Psoas muscle (tissue), 8 donors: ENCODE measurements at regions of chr16 and their contacts with region 1.

Region 1: DNA sequence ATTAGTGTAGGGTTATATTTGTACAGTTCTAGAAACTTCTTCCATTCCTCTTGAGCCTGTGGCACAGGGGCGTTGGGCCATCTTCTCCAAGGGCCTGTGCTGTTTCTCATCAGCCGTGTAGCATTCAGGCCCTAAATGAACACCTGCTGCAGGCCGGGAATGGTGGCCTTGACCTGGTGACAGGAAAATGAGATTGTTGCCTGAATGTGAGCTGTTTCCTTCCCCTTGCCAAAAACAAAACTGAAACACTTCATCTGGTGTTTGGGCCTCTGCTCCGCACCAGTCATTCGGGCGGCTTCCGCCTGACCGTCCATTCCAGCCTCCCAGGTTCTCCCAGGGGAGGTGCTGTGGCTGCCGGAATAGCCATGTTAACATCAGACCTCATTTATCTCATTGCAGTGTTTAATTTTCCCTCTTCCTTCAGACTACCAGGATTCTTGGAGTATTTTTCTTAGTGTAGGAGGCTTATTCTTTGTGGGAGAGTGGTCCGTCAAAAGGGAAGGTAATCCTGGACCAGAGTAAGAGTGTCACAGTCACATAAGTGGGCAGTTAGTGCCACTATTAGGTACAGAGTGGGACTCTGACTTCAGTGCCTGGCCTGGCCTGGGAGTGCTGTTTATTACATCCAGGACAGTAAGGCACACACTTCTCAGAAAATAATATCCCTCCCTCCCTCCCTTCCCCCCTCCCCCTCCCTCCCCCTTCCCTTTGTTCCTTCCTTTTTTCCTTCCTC is 61.9 kb downstream of the WWP2 start:
- DNase-seq: peak; percentile 54 to 58
- ATAC-seq: peak in 3 of 4 donors; percentile 35 to 40 (median 35)
- H3K4me3 ChIP-seq: no peak overlapping the region
- H3K27ac ChIP-seq: peak overlapping the region; percentile 54
- H3K4me1 ChIP-seq: peaks cover 6% of the 10 kb centered on the region
- H3K27me3 ChIP-seq: no peaks in the 10 kb centered on the region
- CTCF ChIP-seq: no peak

Region 2: GRCh38 chr16:69773260-69773947 is 50.6 kb before region 1 on chr16:
- intact Hi-C with region 1: loop called in 1 of 2 experiments (anchors 10 kb)
- DNase-seq: no peak
- ATAC-seq: no peak
- H3K4me3 ChIP-seq: no peak overlapping the region
- H3K27ac ChIP-seq: no peak overlapping the region
- H3K4me1 ChIP-seq: no peaks in the 10 kb centered on the region
- H3K27me3 ChIP-seq: no peaks in the 10 kb centered on the region
- CTCF ChIP-seq: no peak

Region 3: GRCh38 chr16:69787883-69788282 is 36.1 kb before region 1 on chr16:
- intact Hi-C with region 1: no loop called
- DNase-seq: no peak
- ATAC-seq: no peak
- H3K4me3 ChIP-seq: no peak overlapping the region
- H3K27ac ChIP-seq: no peak overlapping the region
- H3K4me1 ChIP-seq: no peaks in the 10 kb centered on the region
- H3K27me3 ChIP-seq: no peaks in the 10 kb centered on the region
- CTCF ChIP-seq: no peak

Region 4: GRCh38 chr16:69812688-69813014 is 11.3 kb before region 1 on chr16:
- intact Hi-C with region 1: loop called in 1 of 2 experiments (anchors 2 kb)
- DNase-seq: no peak
- ATAC-seq: no peak
- H3K4me3 ChIP-seq: no peak overlapping the region
- H3K27ac ChIP-seq: no peak overlapping the region
- H3K4me1 ChIP-seq: no peaks in the 10 kb centered on the region
- H3K27me3 ChIP-seq: no peaks in the 10 kb centered on the region
- CTCF ChIP-seq: no peak